Sigmoid colon (tissue), 7 donors: ENCODE measurements at regions of chr19 and their contacts with region 1.

Region 1: DNA sequence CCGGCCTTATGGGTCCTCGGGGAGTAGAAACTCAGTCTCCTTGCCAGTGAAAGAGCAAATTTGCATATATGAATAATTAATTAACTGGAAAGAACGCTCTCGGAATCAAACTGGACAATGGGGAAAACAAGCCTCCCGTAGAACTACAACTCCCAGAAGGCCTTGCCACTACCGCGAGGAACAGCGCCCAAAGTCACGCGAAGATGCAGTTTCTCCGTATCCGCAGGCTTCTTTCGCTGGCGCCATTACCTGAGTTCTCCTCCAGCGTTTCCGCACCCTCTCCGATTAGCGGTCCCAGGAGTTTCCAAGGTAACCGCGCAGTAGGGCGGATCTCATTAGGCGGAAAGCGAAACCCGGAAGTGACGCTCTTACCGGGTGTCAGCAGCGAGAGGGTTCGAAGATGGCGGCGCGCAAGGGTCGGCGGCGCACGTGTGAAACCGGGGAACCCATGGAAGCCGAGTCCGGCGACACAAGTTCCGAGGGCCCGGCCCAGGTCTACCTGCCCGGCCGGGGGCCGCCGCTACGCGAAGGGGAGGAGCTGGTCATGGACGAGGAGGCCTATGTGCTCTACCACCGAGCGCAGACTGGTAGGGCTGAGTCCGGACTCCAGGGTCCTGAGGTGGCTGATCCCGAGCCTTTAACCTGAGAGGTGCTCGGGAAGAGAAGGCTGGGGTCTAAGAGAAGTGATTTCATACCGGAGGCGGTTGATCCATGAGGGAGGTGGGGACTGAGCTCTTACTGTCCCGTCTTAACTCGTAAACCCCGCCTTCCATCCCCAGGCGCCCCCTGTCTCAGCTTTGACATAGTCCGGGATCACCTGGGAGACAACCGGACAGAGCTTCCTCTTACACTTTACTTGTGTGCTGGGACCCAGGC is at the start of gene GRWD1:
- DNase-seq: peak; percentile 97
- H3K4me3 ChIP-seq: peak within 1 kb of the TSS; percentile 59 to 98 (median 82)
- H3K27ac ChIP-seq: peak within 1 kb of the TSS; percentile 81 to 86 (median 85)
- H3K4me1 ChIP-seq: peaks cover 0 to 34% (median 30%) of the 10 kb centered on the region in 4 donors
- H3K27me3 ChIP-seq: peaks cover 21 to 36% (median 27%) of the 10 kb centered on the region in 3 donors
- CTCF ChIP-seq: no peak
- EP300 ChIP-seq: peak in 1 of 4 donors; percentile 4
- POLR2A ChIP-seq: no peak
- total RNA-seq, gene GRWD1: 12.5 to 25.5 (median 17.6) TPM

Region 2: GRCh38 chr19:48403606-48404005 is 42.2 kb before region 1 on chr19:
- intact Hi-C with region 1: loop called (anchors 5 kb)
- DNase-seq: no peak
- H3K4me3 ChIP-seq: no peak overlapping the region
- H3K27ac ChIP-seq: no peak overlapping the region
- H3K4me1 ChIP-seq: peaks cover 0 to 2% (median 2%) of the 10 kb centered on the region in 4 donors
- H3K27me3 ChIP-seq: peaks cover 0 to 25% (median 15%) of the 10 kb centered on the region in 3 donors
- CTCF ChIP-seq: no peak
- EP300 ChIP-seq: no peak
- POLR2A ChIP-seq: no peak

Region 3: DNA sequence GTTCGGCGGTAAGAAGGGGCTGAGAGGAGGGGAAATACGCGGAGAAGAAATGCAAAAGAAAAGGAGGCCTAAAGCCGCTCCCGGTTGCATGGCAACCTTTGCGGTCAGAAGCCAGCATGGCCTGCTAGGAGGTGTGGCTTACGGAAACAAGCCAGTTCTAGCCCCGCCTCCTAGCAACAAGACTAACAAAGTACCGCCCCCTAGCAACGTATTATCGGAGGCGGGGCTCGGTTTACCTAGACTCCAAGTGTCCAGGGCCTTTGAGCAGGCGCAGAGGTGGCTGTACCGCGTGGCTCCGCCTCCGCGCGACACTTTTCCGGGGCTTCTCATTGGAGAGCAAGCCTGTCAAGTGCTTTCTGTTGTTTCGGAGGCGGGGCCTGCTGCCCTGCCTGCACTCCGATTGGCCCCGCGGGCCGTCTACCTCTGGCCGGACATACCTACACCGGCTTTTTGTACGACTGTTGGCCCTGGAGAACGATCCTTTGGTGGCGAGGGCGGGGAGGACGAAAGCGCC is 23.0 kb after region 1 on chr19:
- intact Hi-C with region 1: loop called (anchors 2 kb)
- DNase-seq: peak; percentile 100
- H3K4me3 ChIP-seq: peak overlapping the region; percentile 78 to 99 (median 94)
- H3K27ac ChIP-seq: peak overlapping the region; percentile 97 to 99 (median 98)
- H3K4me1 ChIP-seq: peaks cover 0 to 33% (median 23%) of the 10 kb centered on the region in 4 donors
- H3K27me3 ChIP-seq: no peaks in the 10 kb centered on the region
- CTCF ChIP-seq: no peak
- EP300 ChIP-seq: no peak
- POLR2A ChIP-seq: no peak

Region 4: DNA sequence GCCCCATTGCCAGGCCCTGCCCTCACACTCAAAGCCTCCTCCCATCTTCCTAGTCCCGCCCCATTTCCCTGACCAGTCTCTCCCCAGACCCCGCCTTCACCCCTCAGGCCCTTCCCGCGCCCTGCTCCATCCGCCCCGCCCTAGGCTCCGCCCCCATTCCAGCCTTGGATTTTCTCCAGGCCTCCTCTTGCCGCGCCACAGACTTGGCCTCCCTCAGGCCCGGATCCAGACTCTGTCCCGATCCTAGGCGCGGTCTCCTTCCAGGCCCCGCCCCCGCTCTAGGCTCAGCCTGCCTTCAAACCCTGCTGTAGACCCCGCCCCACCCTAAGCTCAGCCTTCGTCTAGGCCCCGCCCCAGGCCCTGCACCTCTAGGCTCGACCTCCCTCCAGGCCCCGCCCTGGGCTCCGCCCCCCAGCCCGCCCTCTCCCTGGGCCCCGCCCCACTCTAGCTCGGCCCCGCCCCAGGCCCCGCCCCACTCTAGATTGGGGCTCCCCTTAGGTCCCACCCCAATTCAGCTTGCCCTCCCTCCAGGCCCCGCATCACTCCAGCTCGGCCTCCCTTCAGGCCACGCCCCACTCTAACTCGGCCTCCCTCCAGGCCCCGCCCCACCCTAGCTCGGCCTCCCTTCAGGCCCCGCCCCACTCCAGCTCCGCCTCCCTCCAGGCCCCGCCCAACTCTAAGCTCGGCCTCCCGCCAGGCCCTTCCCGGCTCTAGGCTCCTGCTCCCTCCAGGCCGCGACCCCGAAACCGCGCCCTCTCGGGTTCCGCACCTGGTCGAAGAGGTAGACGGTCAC is 47.3 kb after region 1 on chr19:
- intact Hi-C with region 1: no loop called
- DNase-seq: peak; percentile 98
- H3K4me3 ChIP-seq: peak overlapping the region; percentile 39 to 56 (median 50)
- H3K27ac ChIP-seq: peak overlapping the region; percentile 64 to 83 (median 75)
- H3K4me1 ChIP-seq: peaks cover 0 to 35% (median 29%) of the 10 kb centered on the region in 4 donors
- H3K27me3 ChIP-seq: peaks cover 5 to 44% (median 21%) of the 10 kb centered on the region in 3 donors
- CTCF ChIP-seq: no peak
- EP300 ChIP-seq: no peak
- POLR2A ChIP-seq: peak in 1 of 2 donors; percentile 73

Region 5: GRCh38 chr19:48578891-48579290 is 133.0 kb after region 1 on chr19:
- intact Hi-C with region 1: no loop called
- DNase-seq: no peak
- H3K4me3 ChIP-seq: no peak overlapping the region
- H3K27ac ChIP-seq: no peak overlapping the region
- H3K4me1 ChIP-seq: peaks cover 0 to 3% (median 1%) of the 10 kb centered on the region in 4 donors
- H3K27me3 ChIP-seq: no peaks in the 10 kb centered on the region
- CTCF ChIP-seq: no peak
- EP300 ChIP-seq: no peak
- POLR2A ChIP-seq: no peak